ENCODE measurements at regions of chr3 and their contacts with region 1.

Region 1: DNA sequence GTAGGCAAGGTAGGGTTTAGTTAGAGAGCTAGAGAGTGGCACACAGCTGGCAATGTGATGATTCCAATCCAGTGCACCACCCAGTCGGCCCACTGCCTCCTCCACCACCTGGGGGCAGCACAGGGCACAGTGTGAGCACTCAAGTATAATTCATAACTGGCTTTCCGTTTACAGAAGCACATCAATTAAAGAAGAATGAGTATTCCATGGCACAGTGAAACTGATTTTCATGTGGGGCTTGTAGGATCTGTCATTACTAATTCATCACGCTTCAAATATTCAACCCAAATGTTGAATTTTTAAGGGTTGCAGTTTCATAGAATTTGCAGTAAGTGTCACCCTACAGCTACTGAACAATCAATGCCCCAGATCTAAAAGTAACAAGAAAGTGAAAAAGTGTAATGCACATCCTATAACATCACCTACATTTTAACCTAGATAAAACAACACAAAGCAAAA is 149.9 kb downstream of the IGSF11 start:
- DNase-seq: peak; percentile 44
- ATAC-seq: peak; percentile 75
- H3K4me3 Mint-ChIP-seq: no peak overlapping the region
- H3K27ac Mint-ChIP-seq: no peak overlapping the region
- H3K4me1 Mint-ChIP-seq: no peaks in the 10 kb centered on the region
- H3K27me3 Mint-ChIP-seq: peaks cover 20% of the 10 kb centered on the region
- CTCF ChIP-seq: peak; percentile 74

Region 2: DNA sequence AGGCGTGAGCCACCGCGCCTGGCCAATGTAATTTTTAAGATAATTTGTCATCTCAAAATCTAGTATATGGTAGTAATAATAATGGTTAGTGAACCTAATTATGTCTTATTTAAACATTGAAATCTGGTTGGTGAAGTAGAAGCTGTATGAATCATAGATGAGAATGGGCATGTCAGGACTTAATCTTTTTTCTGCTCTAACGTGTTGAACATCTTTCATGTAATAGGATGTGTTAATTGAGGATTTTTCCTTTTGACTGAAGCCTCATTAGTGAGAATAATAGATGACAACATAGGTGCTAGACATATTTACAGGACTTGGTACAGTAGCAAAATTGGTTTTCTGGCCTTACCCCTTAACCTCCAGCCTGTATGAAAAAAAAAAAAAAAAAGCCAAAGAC is 685.7 kb before region 1 on chr3:
- CTCF ChIA-PET with region 1: no interaction called
- POLR2A ChIA-PET with region 1: no interaction called
- intact Hi-C with region 1: no loop called
- DNase-seq: no peak
- ATAC-seq: no peak
- H3K4me3 Mint-ChIP-seq: no peak overlapping the region
- H3K27ac Mint-ChIP-seq: no peak overlapping the region
- H3K4me1 Mint-ChIP-seq: no peaks in the 10 kb centered on the region
- H3K27me3 Mint-ChIP-seq: no peaks in the 10 kb centered on the region
- CTCF ChIP-seq: no peak

Region 3: DNA sequence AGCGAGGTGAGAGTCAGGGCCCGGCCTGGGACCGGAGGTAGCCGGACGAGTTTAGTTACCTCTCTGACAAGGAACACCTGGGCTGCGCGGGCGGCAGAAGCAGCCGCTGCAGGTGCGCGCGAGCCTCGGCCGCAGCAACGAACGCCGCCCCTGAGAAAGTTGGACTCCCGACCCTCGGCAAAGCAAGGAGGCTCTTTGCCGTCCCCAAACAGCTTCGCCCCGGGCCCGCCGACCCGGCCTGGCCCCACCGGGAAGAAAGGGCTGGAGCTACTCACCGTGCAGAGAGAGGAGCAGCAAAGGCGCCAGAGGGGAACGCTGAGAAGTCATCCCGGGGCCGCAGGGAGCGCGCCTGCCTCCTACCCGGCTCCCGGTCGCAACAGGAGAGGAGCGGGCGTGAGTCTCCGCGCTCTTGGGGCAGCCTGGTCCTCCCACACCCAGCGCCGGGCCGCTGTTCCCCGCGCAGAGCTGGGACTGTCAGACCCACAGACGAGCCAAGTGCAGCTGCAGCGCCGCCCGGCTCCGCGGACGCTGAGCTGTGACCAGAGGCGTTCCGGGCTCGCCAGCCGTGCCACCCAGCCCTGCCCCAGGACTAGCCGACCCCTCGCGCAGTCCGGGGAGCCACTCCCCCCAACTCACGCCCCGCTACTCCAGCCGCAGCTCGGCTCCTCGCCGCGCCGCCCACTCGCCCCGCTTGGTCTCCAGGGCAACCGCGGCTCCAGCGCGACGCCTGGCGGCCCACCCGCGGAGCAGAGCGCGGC is 149.7 kb after region 1 on chr3 and contains the start of gene IGSF11:
- CTCF ChIA-PET with region 1: interaction called, 24 read pairs
- POLR2A ChIA-PET with region 1: no interaction called
- intact Hi-C with region 1: loop called (anchors 1 kb)
- DNase-seq: peak; percentile 49
- ATAC-seq: peak; percentile 88
- H3K4me3 Mint-ChIP-seq: peak within 1 kb of the TSS; percentile 82
- H3K27ac Mint-ChIP-seq: no peak within 1 kb of the TSS
- H3K4me1 Mint-ChIP-seq: peaks cover 9% of the 10 kb centered on the region
- H3K27me3 Mint-ChIP-seq: peaks cover 40% of the 10 kb centered on the region
- CTCF ChIP-seq: no peak
- total RNA-seq, gene IGSF11: not detected in 2 replicates

Region 4: GRCh38 chr3:119098619-119099222 is 213.9 kb after region 1 on chr3:
- CTCF ChIA-PET with region 1: interaction called, 86 read pairs
- POLR2A ChIA-PET with region 1: no interaction called
- intact Hi-C with region 1: loop called (anchors 1 kb)
- DNase-seq: no peak
- ATAC-seq: no peak
- H3K4me3 Mint-ChIP-seq: no peak overlapping the region
- H3K27ac Mint-ChIP-seq: no peak overlapping the region
- H3K4me1 Mint-ChIP-seq: no peaks in the 10 kb centered on the region
- H3K27me3 Mint-ChIP-seq: peaks cover 2% of the 10 kb centered on the region
- CTCF ChIP-seq: no peak

Region 5: DNA sequence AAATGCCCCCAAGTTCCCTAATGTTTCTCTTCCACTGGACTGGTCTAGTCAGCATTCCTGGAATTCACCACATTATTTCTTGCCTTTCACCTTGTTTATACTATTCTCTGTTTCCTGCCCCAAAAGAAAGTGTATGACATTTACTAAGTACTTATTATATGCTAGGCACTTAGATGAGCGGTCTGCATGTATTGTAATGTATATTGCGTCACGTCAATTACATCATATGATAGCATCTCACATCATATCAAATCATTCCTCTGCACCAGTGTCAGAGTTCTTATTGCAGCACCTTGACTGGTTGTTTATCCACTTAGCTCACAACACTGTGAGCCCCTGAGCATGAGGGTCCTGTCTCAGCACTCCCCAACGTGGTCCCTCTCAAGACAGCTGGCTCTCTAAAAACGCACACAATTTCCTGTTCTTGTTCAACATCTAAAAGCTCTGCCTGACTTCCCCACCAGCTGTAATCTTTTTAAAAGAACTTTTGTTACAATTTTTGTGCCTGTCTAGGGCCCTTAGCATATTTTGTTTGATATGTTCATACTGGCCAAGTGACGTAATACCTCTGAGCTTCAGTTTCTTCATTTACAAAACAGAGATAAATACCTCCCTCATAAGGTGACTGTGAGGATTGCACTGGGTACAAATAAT is 468.2 kb after region 1 on chr3:
- CTCF ChIA-PET with region 1: interaction called, 11 read pairs
- POLR2A ChIA-PET with region 1: no interaction called
- intact Hi-C with region 1: loop called (anchors 2 kb)
- DNase-seq: no peak
- ATAC-seq: peak; percentile 46
- H3K4me3 Mint-ChIP-seq: peak overlapping the region; percentile 41
- H3K27ac Mint-ChIP-seq: peak overlapping the region; percentile 47
- H3K4me1 Mint-ChIP-seq: peaks cover 47% of the 10 kb centered on the region
- H3K27me3 Mint-ChIP-seq: no peaks in the 10 kb centered on the region
- CTCF ChIP-seq: no peak

Region 6: GRCh38 chr3:119469381-119470189 is 584.8 kb after region 1 on chr3:
- CTCF ChIA-PET with region 1: no interaction called
- POLR2A ChIA-PET with region 1: no interaction called
- intact Hi-C with region 1: loop called (anchors 1 kb)
- DNase-seq: no peak
- ATAC-seq: peak; percentile 45
- H3K4me3 Mint-ChIP-seq: peak overlapping the region; percentile 93
- H3K27ac Mint-ChIP-seq: peak overlapping the region; percentile 90
- H3K4me1 Mint-ChIP-seq: peaks cover 32% of the 10 kb centered on the region
- H3K27me3 Mint-ChIP-seq: no peaks in the 10 kb centered on the region
- CTCF ChIP-seq: no peak

Region 7: GRCh38 chr3:120147072-120147871 is 1262.5 kb after region 1 on chr3:
- CTCF ChIA-PET with region 1: interaction called, 5 read pairs
- POLR2A ChIA-PET with region 1: no interaction called
- intact Hi-C with region 1: loop called (anchors 2 kb)
- DNase-seq: no peak
- ATAC-seq: peak; percentile 56
- H3K4me3 Mint-ChIP-seq: no peak overlapping the region
- H3K27ac Mint-ChIP-seq: no peak overlapping the region
- H3K4me1 Mint-ChIP-seq: no peaks in the 10 kb centered on the region
- H3K27me3 Mint-ChIP-seq: no peaks in the 10 kb centered on the region
- CTCF ChIP-seq: no peak

Region 8: GRCh38 chr3:120795017-120795648 is 1910.4 kb after region 1 on chr3:
- CTCF ChIA-PET with region 1: no interaction called
- POLR2A ChIA-PET with region 1: no interaction called
- intact Hi-C with region 1: loop called (anchors 10 kb)
- DNase-seq: peak; percentile 53
- ATAC-seq: peak; percentile 96
- H3K4me3 Mint-ChIP-seq: no peak overlapping the region
- H3K27ac Mint-ChIP-seq: no peak overlapping the region
- H3K4me1 Mint-ChIP-seq: no peaks in the 10 kb centered on the region
- H3K27me3 Mint-ChIP-seq: no peaks in the 10 kb centered on the region
- CTCF ChIP-seq: no peak

Measured in activated B cell treated with CpG ODN at 0.5 μM for 24 hours (primary cell).